AG04449 (cell line): ENCODE measurements at regions of chr4 and their contacts with region 1.

Region 1: DNA sequence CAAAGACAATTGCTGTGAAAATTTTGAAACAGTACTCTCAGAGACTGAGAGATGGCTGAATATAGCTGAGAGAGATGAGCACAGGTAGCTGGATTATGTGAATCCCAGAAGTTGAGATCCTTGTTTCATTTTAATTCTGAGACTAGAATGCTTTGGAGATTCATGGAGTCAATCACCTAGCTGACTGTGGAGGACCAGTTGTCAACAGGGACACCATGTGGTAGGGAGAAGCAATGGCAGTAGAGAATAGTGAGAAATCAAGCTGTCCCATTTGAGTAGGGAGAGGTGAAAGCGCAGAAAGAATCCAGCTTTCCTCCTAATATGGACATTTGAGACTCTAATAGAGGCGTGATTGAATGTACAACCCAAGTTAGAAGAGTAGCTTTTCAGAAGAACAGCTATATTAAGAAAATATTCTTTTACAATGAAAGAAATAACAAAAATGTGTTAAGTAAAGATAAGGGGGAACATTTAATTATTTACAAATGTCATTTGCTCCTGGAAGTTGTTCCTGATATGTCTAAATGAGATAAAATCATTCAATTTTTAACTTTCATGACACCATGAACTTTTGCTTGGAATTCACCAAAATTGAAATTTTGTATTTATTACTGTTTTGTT is 30.3 kb upstream of the GLRB start:
- DNase-seq: peak; percentile 17
- H3K4me3 ChIP-seq: no peak overlapping the region
- CTCF ChIP-seq: peak; percentile 87

Region 2: DNA sequence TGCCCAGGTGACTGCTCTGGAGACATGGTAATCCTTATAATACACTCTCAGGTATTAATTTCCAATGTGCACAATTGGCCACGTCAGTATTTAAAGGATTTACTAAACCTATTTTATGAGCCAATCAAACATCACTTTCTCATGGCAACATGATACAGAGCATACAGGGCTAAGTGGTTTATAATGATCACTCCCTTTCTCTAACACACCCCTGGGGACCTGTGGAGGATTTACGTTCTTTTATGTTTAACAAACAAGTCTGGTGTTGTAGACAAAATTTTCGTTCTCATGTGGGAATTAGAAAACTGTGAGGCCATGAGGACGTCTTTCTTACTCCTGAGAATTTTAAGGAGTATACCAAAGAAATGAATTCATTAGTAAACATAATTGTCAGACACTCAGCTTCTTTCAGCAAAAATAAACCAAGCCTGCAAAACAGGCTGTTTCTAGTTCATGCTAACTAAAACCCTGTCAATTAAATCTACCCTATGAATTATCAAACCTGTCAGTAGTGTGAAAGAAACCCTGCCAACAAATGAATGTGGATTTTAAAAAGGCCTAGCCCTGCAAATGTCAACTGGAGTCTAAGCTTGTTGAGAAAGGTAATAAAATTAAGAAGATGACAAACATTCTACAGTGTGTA is 229.8 kb before region 1 on chr4:
- CTCF ChIA-PET with region 1: no interaction called
- POLR2A ChIA-PET with region 1: no interaction called
- DNase-seq: no peak
- H3K4me3 ChIP-seq: no peak overlapping the region
- CTCF ChIP-seq: no peak

Region 3: DNA sequence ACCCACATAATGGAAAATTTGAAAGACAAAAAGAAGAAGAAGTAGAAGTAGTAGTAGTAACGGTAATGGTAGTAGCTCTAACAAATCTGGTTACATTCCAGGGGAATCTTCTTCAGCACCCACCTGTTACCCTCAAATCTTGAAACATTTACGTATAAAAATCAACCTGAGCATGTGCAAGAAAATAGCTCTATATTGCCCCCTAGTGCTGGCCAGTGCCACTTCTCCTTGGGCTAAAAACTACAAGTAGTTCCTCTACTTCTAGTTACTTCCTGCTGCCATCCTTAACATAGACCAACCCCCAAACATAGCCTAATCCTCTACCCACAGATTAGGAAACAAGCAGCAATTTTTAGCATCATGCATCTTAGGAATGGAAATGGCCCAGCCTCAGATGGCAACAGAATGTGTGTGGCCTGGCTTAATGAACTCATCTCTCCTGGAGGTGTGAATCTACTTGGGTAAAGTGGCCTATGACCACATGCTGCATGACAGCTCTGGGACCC is 77.1 kb before region 1 on chr4:
- CTCF ChIA-PET with region 1: interaction called, 44 read pairs
- POLR2A ChIA-PET with region 1: interaction called, 8 read pairs
- DNase-seq: no peak
- H3K4me3 ChIP-seq: peak overlapping the region; percentile 88
- CTCF ChIP-seq: peak; percentile 60

Region 4: GRCh38 chr4:156983366-156983765 is 62.3 kb before region 1 on chr4:
- CTCF ChIA-PET with region 1: interaction called, 32 read pairs
- POLR2A ChIA-PET with region 1: no interaction called
- DNase-seq: no peak
- H3K4me3 ChIP-seq: no peak overlapping the region
- CTCF ChIP-seq: peak; percentile 45

Region 5: GRCh38 chr4:157020882-157021281 is 24.7 kb before region 1 on chr4:
- CTCF ChIA-PET with region 1: interaction called, 12 read pairs
- POLR2A ChIA-PET with region 1: no interaction called
- DNase-seq: no peak
- H3K4me3 ChIP-seq: no peak overlapping the region
- CTCF ChIP-seq: no peak

Region 6: DNA sequence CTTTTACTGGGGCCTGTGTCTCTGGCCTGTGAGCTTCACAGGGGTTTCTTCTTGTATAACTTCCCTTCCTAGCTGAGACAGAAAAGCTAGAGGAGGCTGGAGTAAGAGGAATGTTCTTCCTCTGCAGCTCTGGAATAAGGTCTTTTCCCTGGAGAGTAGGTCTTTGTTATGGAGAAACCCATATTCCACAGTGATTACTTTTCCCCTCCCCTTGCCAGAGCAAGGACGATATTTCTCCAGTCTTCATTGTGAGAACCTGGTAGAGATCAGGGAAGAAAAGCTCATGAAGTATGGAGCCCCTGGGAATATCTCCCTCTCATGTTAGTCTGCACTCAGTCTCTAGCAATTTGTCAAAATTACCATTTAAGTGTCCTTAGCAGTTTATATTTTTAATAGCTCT is 11.6 kb after region 1 on chr4:
- CTCF ChIA-PET with region 1: interaction called, 38 read pairs
- POLR2A ChIA-PET with region 1: no interaction called
- DNase-seq: no peak
- H3K4me3 ChIP-seq: no peak overlapping the region
- CTCF ChIP-seq: no peak